A673 (cell line): ENCODE measurements at regions of chr4 and their contacts with region 1.

Region 1: GRCh38 chr4:112951362-112952312 is 97.8 kb upstream of the ANK2 start:
- DNase-seq: peak; percentile 60
- H3K4me3 ChIP-seq: no peak overlapping the region
- H3K27ac ChIP-seq: no peak overlapping the region
- H3K4me1 ChIP-seq: peaks cover 62% of the 10 kb centered on the region
- H3K27me3 ChIP-seq: no peaks in the 10 kb centered on the region
- CTCF ChIP-seq: peak; percentile 72

Region 2: DNA sequence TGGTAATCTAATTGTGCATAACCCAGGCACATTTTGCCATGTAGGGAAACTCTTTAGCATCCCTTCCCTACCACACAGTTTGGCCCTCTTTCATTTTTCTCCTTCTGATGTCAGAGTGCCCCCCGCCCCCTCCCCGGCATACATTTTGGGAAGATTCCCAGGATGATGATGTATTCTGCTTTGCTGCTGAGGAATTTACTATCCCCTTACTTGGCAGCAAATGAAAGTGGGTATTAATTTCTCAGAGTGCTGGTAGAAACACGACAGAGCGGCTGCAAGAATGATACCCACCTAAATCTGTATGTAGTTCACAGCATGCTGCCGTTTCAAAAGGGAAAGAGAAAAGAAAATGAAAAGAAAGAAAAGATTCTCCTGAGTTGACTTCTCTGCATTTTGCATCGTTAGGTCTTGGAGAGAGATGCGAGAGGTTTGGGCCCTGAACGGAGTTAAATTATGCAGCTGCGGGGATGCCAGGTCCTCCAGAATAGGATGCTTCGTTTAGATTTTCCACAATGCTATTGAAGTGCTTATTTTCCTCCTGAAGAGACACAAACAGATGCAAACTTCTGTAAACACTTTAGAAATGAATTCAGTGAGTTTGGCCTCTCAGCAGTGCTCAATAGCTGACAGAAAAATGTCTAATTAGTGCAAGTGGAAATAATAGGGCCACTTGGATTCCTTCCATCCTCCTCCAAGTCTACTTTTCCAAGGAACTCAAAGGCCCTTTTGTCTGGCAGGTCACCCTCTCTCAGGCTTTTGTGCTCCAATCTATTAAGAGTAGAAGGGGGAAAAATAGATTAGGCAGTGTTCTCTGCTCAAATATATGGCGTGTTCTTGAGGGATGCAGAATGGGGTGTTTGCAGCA is 548.3 kb before region 1 on chr4:
- CTCF ChIA-PET with region 1: interaction called, 15 read pairs
- POLR2A ChIA-PET with region 1: no interaction called
- intact Hi-C with region 1: no loop called
- DNase-seq: no peak
- H3K4me3 ChIP-seq: no peak overlapping the region
- H3K27ac ChIP-seq: no peak overlapping the region
- H3K4me1 ChIP-seq: no peaks in the 10 kb centered on the region
- H3K27me3 ChIP-seq: no peaks in the 10 kb centered on the region
- CTCF ChIP-seq: no peak